Cardiac septum (tissue), 1 donor: ENCODE measurements at regions of chr12 and their contacts with region 1.

Region 1: GRCh38 chr12:43882578-43883178 is 46.8 kb downstream of the TMEM117 start:
- DNase-seq: no peak

Region 2: GRCh38 chr12:43776498-43776897 is 106.2 kb before region 1 on chr12:
- intact Hi-C with region 1: loop called (anchors 10 kb)
- DNase-seq: no peak